Endothelial cell of umbilical vein (primary cell): ENCODE measurements at regions of chr12 and their contacts with region 1.

Region 1: GRCh38 chr12:105053116-105053572 is 31.1 kb downstream of the ALDH1L2 start:
- DNase-seq: peak; percentile 86
- H3K4me3 ChIP-seq: no peak overlapping the region
- H3K27ac ChIP-seq: no peak overlapping the region
- H3K4me1 ChIP-seq: no peaks in the 10 kb centered on the region
- H3K27me3 ChIP-seq: no peaks in the 10 kb centered on the region
- CTCF ChIP-seq: peak; percentile 80 to 81
- POLR2A ChIP-seq: no peak

Region 2: GRCh38 chr12:104825408-104825807 is 227.7 kb before region 1 on chr12:
- CTCF ChIA-PET with region 1: no interaction called
- POLR2A ChIA-PET with region 1: no interaction called
- dilution Hi-C with region 1: no loop called
- intact Hi-C with region 1: loop called (anchors 5 kb)
- DNase-seq: no peak
- H3K4me3 ChIP-seq: no peak overlapping the region
- H3K27ac ChIP-seq: no peak overlapping the region
- H3K4me1 ChIP-seq: no peaks in the 10 kb centered on the region
- H3K27me3 ChIP-seq: no peaks in the 10 kb centered on the region
- CTCF ChIP-seq: peak; percentile 16 to 35
- POLR2A ChIP-seq: no peak

Region 3: DNA sequence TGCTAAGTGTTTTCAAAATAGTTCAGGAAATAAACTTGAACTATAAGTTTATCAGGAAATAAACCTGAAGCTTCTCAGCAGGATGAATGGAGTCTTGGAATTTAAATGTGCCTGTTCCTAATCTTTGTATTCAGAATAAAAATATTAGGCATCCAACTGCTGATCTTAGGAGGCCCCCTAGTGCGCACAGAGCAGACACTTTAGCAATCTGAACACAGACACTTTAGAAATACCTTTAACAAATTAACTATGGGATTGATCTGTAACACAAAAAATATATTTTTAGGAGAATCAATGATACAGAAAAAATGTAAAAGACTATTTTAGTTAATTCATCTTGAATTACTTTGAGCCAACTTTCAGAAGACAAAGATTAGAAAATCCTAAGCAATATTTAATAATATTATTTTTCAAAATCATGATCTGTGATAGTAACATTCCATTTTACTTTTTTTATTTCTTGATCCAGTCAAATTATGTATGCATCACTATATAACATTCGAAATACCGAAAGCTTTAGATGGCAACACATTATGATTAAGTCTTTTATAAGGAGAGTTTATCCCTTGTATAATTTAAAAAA is 175.9 kb before region 1 on chr12:
- CTCF ChIA-PET with region 1: interaction called, 3 read pairs
- POLR2A ChIA-PET with region 1: no interaction called
- dilution Hi-C with region 1: no loop called
- intact Hi-C with region 1: loop called (anchors 5 kb)
- DNase-seq: peak; percentile 63
- H3K4me3 ChIP-seq: no peak overlapping the region
- H3K27ac ChIP-seq: no peak overlapping the region
- H3K4me1 ChIP-seq: no peaks in the 10 kb centered on the region
- H3K27me3 ChIP-seq: no peaks in the 10 kb centered on the region
- CTCF ChIP-seq: peak; percentile 27 to 50
- POLR2A ChIP-seq: no peak

Region 4: DNA sequence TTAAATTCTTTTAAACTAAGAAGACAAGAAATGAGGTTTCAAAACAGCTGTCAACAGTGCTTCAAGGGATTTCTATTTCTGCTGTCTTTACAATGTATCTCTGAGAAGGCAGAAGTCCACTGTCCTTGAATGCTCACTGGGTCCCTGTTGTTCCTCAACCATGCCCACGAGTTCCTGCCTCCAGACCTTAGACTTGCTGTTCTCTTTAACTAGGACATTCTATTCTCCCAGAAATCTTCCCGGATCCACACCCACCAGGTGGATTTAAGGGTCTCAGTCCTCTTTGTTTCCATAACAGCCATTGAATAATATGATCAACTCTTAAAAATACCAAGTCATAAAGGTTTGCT is 88.3 kb before region 1 on chr12:
- CTCF ChIA-PET with region 1: no interaction called
- POLR2A ChIA-PET with region 1: no interaction called
- dilution Hi-C with region 1: no loop called
- intact Hi-C with region 1: no loop called
- DNase-seq: no peak
- H3K4me3 ChIP-seq: no peak overlapping the region
- H3K27ac ChIP-seq: no peak overlapping the region
- H3K4me1 ChIP-seq: no peaks in the 10 kb centered on the region
- H3K27me3 ChIP-seq: peaks cover 0 to 16% of the 10 kb centered on the region in 2 experiments
- CTCF ChIP-seq: no peak
- POLR2A ChIP-seq: no peak

Region 5: GRCh38 chr12:105100998-105101397 is 47.9 kb after region 1 on chr12:
- CTCF ChIA-PET with region 1: interaction called, 12 read pairs
- POLR2A ChIA-PET with region 1: no interaction called
- dilution Hi-C with region 1: no loop called
- intact Hi-C with region 1: no loop called
- DNase-seq: peak; percentile 22
- H3K4me3 ChIP-seq: no peak overlapping the region
- H3K27ac ChIP-seq: no peak overlapping the region
- H3K4me1 ChIP-seq: peaks cover 4% of the 10 kb centered on the region
- H3K27me3 ChIP-seq: peaks cover 2 to 8% of the 10 kb centered on the region in 2 experiments
- CTCF ChIP-seq: no peak
- POLR2A ChIP-seq: no peak